ENCODE measurements at regions of chr17 and their contacts with region 1.

Region 1: GRCh38 chr17:43367737-43368242 is 31.0 kb upstream of the ARL4D start:
- DNase-seq: peak in 1 of 5 donors; percentile 86
- H3K4me3 ChIP-seq: peak overlapping the region; percentile 79
- H3K4me3 Mint-ChIP-seq: peak overlapping the region; percentile 90 to 98 (median 95)
- H3K27ac ChIP-seq: peak overlapping the region; percentile 96
- H3K27ac Mint-ChIP-seq: peak overlapping the region; percentile 98 to 100 (median 100)
- H3K4me1 ChIP-seq: peaks cover 22% of the 10 kb centered on the region
- H3K4me1 Mint-ChIP-seq: peaks cover 24 to 34% (median 30%) of the 10 kb centered on the region in 3 donors
- H3K27me3 ChIP-seq: no peaks in the 10 kb centered on the region
- H3K27me3 Mint-ChIP-seq: peaks cover 0 to 1% of the 10 kb centered on the region in 2 donors

Region 2: DNA sequence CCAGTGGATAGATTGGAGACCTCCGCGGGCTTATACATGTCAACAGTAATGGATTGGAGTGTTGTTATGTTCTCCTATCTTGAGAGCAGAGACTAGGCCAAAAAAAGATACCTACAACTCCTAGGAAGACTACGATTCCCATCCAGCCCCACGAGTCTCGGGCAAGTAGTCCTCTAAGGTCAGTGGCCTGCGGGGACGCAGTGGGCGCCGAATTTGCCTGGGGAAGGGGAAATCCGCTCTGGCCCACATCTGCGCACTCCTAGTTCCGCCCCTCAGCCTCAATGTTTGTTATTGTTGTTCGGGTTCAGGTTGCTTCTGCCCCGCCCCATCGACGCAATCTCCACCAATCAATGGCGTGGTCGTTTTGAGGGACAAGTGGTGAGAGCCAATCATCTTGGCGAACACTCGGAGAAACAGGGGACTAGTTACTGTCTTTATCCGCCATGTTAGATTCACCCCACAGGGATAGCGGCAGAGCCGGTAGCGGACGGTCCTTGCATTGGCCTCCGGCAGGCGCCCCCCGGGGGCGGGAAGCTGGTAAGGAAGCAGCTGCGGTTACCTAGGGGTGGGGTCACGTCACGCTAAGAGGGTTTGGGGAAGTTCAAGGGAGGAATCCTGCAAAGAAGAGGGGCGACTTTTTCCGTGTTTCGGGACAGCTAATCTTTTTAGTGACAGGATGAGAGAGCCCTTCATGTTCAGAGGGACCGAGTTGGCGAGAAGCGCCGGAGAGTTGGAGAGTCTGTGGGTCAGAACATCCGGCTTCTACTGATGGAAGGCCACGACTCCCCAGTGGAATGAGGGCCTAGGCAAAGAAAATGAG is 196.8 kb before region 1 on chr17 and contains the start of gene NBR1:
- CTCF ChIA-PET with region 1: no interaction called
- POLR2A ChIA-PET with region 1: interaction called, 12 read pairs
- DNase-seq: peak; percentile 87 to 98 (median 96)
- H3K4me3 ChIP-seq: peak within 1 kb of the TSS; percentile 90
- H3K4me3 Mint-ChIP-seq: no peak within 1 kb of the TSS
- H3K27ac ChIP-seq: peak within 1 kb of the TSS; percentile 99
- H3K27ac Mint-ChIP-seq: no peak within 1 kb of the TSS
- H3K4me1 ChIP-seq: peaks cover 43% of the 10 kb centered on the region
- H3K4me1 Mint-ChIP-seq: peaks cover 30 to 37% (median 34%) of the 10 kb centered on the region in 3 donors
- H3K27me3 ChIP-seq: no peaks in the 10 kb centered on the region
- H3K27me3 Mint-ChIP-seq: no peaks in the 10 kb centered on the region
- total RNA-seq, gene NBR1: 42.6 to 44.3 TPM

Region 3: GRCh38 chr17:43316522-43317142 is 51.2 kb before region 1 on chr17:
- CTCF ChIA-PET with region 1: interaction called, 3 read pairs
- POLR2A ChIA-PET with region 1: interaction called, 89 read pairs
- DNase-seq: peak; percentile 13 to 62 (median 28)
- H3K4me3 ChIP-seq: no peak overlapping the region
- H3K4me3 Mint-ChIP-seq: peak overlapping the region in 5 of 7 donors; percentile 16 to 74 (median 38)
- H3K27ac ChIP-seq: no peak overlapping the region
- H3K27ac Mint-ChIP-seq: peak overlapping the region in 6 of 8 donors; percentile 10 to 72 (median 37)
- H3K4me1 ChIP-seq: no peaks in the 10 kb centered on the region
- H3K4me1 Mint-ChIP-seq: peaks cover 2 to 15% (median 12%) of the 10 kb centered on the region in 3 donors
- H3K27me3 ChIP-seq: no peaks in the 10 kb centered on the region
- H3K27me3 Mint-ChIP-seq: no peaks in the 10 kb centered on the region

Region 4: GRCh38 chr17:43388359-43389045 is 20.7 kb after region 1 on chr17:
- CTCF ChIA-PET with region 1: interaction called, 24 read pairs
- POLR2A ChIA-PET with region 1: interaction called, 139 read pairs
- DNase-seq: peak; percentile 83 to 95 (median 91)
- H3K4me3 ChIP-seq: peak overlapping the region; percentile 84
- H3K4me3 Mint-ChIP-seq: peak overlapping the region; percentile 90 to 99 (median 95)
- H3K27ac ChIP-seq: peak overlapping the region; percentile 94
- H3K27ac Mint-ChIP-seq: peak overlapping the region; percentile 94 to 99 (median 98)
- H3K4me1 ChIP-seq: peaks cover 18% of the 10 kb centered on the region
- H3K4me1 Mint-ChIP-seq: peaks cover 26 to 35% (median 30%) of the 10 kb centered on the region in 3 donors
- H3K27me3 ChIP-seq: no peaks in the 10 kb centered on the region
- H3K27me3 Mint-ChIP-seq: no peaks in the 10 kb centered on the region

Region 5: GRCh38 chr17:43483674-43484372 is 116.0 kb after region 1 on chr17 and contains the start of gene DHX8:
- CTCF ChIA-PET with region 1: interaction called, 19 read pairs
- POLR2A ChIA-PET with region 1: interaction called, 39 read pairs
- DNase-seq: peak; percentile 98 to 99 (median 98)
- H3K4me3 ChIP-seq: peak within 1 kb of the TSS; percentile 96
- H3K4me3 Mint-ChIP-seq: peak within 1 kb of the TSS; percentile 98 to 100 (median 100)
- H3K27ac ChIP-seq: peak within 1 kb of the TSS; percentile 88
- H3K27ac Mint-ChIP-seq: peak within 1 kb of the TSS; percentile 85 to 99 (median 98)
- H3K4me1 ChIP-seq: peaks cover 29% of the 10 kb centered on the region
- H3K4me1 Mint-ChIP-seq: peaks cover 30 to 47% (median 41%) of the 10 kb centered on the region in 3 donors
- H3K27me3 ChIP-seq: no peaks in the 10 kb centered on the region
- H3K27me3 Mint-ChIP-seq: peaks cover 0 to 1% of the 10 kb centered on the region in 2 donors
- total RNA-seq, gene DHX8: 64.8 to 70.8 TPM

Measured in CD8-positive, alpha-beta memory T cell (primary cell).